SK-N-SH (cell line): ENCODE measurements at regions of chr9 and their contacts with region 1.

Region 1: DNA sequence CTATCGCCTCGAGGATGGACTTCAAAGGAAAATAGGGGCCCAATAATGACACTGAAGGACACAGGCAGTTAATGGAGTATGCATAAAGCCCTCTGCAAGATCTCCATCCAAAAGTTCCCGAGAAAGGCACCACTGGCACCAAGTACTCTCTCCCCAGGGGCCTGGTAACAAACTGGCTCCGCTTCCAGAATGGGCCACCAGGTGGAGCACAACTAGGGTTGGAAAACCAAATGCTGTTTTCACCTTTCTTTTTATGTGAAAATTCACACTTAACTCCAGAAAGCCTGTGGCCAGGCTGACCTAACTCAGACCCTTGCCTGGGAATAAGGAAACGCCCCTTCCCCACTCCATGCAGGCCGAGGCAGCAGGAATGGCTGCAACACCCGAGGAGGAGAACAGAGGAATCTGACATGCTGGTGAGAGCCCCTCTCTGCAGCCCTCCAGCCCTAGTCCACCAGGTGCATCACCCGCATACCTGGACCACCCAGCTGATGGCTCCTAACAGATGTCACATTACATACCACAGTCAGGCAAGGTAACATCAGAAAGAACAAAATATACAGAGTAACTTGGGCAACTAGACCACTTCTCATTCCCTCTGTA is 42.8 kb downstream of the CAMSAP1 start:
- DNase-seq: peak; percentile 76
- H3K4me3 ChIP-seq: peak overlapping the region in 1 of 2 experiments; percentile 27; a peak in 1 of 4 replicates
- H3K27ac ChIP-seq: no peak overlapping the region; a peak in 1 of 4 replicates
- H3K4me1 ChIP-seq: peaks cover 0 to 6% of the 10 kb centered on the region in 2 experiments; a peak in 1 of 4 replicates
- H3K27me3 ChIP-seq: no peaks in the 10 kb centered on the region
- CTCF ChIP-seq: peak; percentile 92
- EP300 ChIP-seq: no peak
- RAD21 ChIP-seq: peak; percentile 68

Region 2: GRCh38 chr9:135848341-135849047 is 16.1 kb before region 1 on chr9:
- CTCF ChIA-PET with region 1: interaction called, 27 read pairs
- POLR2A ChIA-PET with region 1: no interaction called
- DNase-seq: peak; percentile 48
- H3K4me3 ChIP-seq: no peak overlapping the region
- H3K27ac ChIP-seq: peak overlapping the region in 1 of 2 experiments; percentile 56; a peak in 2 of 4 replicates
- H3K4me1 ChIP-seq: peaks cover 6 to 12% of the 10 kb centered on the region in 2 experiments; a peak in 2 of 4 replicates
- H3K27me3 ChIP-seq: no peaks in the 10 kb centered on the region
- CTCF ChIP-seq: no peak
- EP300 ChIP-seq: no peak
- RAD21 ChIP-seq: no peak